ENCODE measurements at regions of chr11 and their contacts with region 1.

Region 1: GRCh38 chr11:68297812-68298658 is 14.4 kb upstream of the LRP5 start:
- DNase-seq: peak; percentile 95

Region 2: DNA sequence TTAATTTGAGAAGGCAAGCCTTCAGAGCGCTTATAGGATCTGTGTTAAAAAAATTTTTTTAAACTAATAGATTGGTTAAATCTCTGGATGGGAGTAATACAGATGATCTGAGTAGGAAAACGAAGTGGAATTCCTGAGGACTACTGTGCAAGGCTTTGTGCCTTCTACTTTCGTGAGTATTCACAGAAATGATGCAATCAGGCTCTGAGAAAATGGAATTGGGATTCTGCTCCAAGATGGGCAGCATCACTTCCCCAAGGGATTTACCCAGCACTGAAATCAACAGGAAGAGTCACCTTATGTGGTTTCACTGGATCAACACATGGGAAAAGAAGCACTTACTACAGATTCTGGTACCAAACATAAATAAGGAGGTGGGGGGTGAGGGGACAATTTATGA is 97.4 kb before region 1 on chr11:
- intact Hi-C with region 1: no loop called
- DNase-seq: no peak

Region 3: GRCh38 chr11:68213555-68214174 is 84.4 kb before region 1 on chr11:
- intact Hi-C with region 1: loop called in 1 of 2 experiments (anchors 5 kb)
- DNase-seq: peak; percentile 96

Region 4: GRCh38 chr11:68257475-68258362 is 40.3 kb before region 1 on chr11:
- intact Hi-C with region 1: loop called (anchors 5 kb)
- DNase-seq: peak; percentile 99

Region 5: GRCh38 chr11:68263444-68264035 is 34.5 kb before region 1 on chr11:
- intact Hi-C with region 1: loop called (anchors 5 kb)
- DNase-seq: peak; percentile 78

Region 6: DNA sequence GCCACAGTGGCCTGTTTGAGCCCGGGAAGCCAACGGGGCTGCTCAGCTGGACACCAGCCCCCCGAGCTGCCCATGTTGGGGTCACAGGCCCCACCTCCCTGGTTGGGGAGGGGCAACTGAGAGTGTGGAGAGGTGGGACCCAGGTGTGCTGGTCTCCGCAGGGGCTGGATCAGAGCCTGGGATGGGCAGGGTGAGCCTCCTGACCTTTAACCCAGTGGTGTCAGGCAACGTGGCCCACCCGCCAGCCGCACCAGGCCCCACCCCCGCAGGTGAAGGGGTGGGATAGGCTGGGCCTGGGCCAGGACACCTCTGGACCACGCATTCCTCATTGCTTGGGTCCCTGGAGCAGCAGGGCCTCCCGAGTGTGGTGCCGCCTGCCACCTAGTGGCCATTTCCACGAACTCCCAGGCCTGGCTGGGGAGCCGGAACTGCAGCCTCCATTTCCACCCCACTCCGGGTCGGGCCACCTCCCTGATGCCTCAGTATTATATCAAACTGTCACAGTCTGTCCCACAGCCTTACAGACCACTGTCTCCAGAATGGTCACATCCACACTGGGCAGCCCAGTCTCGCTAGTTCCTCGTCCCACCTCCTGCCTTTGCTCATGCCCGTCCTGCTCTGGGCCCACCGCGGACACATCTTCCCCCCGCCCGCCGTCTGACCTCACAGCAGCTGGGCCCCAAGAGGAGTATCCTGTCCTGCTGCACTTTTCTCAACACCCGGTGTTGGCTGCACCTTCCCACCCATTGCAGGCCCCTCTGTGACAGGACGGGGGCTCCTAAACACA is 149.2 kb after region 1 on chr11:
- intact Hi-C with region 1: loop called in 1 of 2 experiments (anchors 10 kb)
- DNase-seq: peak; percentile 93

Region 7: GRCh38 chr11:68525930-68526329 is 227.9 kb after region 1 on chr11:
- intact Hi-C with region 1: no loop called
- DNase-seq: no peak